G401 (cell line): ENCODE measurements at regions of chr1 and their contacts with region 1.

Region 1: GRCh38 chr1:36752891-36753361 is 270.2 kb upstream of the CSF3R start:
- DNase-seq: no peak

Region 2: GRCh38 chr1:36516372-36517325 is 236.3 kb before region 1 on chr1:
- in situ Hi-C with region 1: no loop called
- DNase-seq: peak; percentile 44

Region 3: GRCh38 chr1:36699113-36699911 is 53.6 kb before region 1 on chr1:
- in situ Hi-C with region 1: loop called (anchors 5 kb)
- DNase-seq: peak; percentile 45

Region 4: GRCh38 chr1:36941316-36941978 is 188.5 kb after region 1 on chr1:
- in situ Hi-C with region 1: no loop called
- DNase-seq: no peak

Region 5: GRCh38 chr1:37085397-37085796 is 332.5 kb after region 1 on chr1:
- in situ Hi-C with region 1: no loop called
- DNase-seq: no peak